ENCODE measurements at regions of chr7 and their contacts with region 1.

Region 1: DNA sequence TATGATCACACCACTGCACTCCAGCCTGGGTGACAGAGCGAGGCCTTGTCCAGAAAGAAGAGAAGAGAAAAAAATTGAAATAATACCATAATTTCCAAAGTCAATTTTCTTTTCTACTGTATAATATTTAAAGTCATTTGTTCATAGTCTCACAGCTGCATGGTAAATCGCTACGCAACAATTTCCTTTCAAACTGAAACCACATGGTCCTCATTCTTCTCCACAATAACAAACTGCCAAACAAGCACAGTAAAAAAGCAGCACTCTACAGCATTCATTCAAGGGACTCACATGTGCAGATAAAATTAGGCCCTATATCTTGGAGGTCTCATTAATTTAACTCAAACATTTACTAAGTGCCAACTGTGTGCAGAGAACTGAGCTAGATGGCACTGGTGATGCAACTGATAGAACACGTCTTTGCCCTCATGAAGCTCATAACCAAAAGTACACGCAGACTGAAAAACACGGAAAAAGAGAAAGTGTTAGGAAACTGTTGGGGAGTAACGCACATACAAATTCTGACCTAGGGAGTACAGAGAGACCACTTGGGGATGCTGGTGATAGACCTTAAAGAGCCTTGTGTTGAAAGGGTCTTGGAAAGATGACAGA is 68.4 kb upstream of the SRRM3 start:
- DNase-seq: no peak
- ATAC-seq: no peak
- H3K4me3 ChIP-seq: no peak overlapping the region
- H3K27ac ChIP-seq: no peak overlapping the region
- H3K4me1 ChIP-seq: peaks cover 42% of the 10 kb centered on the region
- H3K27me3 ChIP-seq: no peaks in the 10 kb centered on the region
- CTCF ChIP-seq: no peak
- EP300 ChIP-seq: no peak
- POLR2A ChIP-seq: no peak
- RAD21 ChIP-seq: no peak

Region 2: DNA sequence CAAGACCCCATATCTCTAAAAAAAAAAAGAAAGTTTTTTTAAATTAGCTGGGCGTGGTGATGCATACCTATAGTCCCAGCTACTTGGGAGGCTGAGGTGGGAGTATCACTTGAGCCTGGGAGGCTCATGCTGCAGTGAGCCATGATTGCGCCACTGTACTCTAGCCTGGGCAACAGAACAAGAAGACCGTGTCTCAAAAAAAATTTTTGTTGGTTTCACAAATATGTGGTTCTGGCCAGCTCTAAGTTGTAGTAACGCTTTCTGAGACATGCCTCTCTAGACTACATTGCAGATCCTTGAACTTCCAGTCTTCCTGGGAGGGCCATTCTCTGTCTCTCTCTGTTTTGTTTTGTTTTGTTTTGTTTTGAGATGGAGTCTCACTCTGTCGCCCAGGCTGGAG is 279.0 kb before region 1 on chr7:
- CTCF ChIA-PET with region 1: no interaction called
- POLR2A ChIA-PET with region 1: no interaction called
- in situ Hi-C with region 1: no loop called
- intact Hi-C with region 1: loop called (anchors 5 kb)
- DNase-seq: no peak
- ATAC-seq: no peak
- H3K4me3 ChIP-seq: no peak overlapping the region
- H3K27ac ChIP-seq: no peak overlapping the region
- H3K4me1 ChIP-seq: peaks cover 22% of the 10 kb centered on the region
- H3K27me3 ChIP-seq: no peaks in the 10 kb centered on the region
- CTCF ChIP-seq: no peak
- EP300 ChIP-seq: no peak
- POLR2A ChIP-seq: no peak
- RAD21 ChIP-seq: no peak

Region 3: DNA sequence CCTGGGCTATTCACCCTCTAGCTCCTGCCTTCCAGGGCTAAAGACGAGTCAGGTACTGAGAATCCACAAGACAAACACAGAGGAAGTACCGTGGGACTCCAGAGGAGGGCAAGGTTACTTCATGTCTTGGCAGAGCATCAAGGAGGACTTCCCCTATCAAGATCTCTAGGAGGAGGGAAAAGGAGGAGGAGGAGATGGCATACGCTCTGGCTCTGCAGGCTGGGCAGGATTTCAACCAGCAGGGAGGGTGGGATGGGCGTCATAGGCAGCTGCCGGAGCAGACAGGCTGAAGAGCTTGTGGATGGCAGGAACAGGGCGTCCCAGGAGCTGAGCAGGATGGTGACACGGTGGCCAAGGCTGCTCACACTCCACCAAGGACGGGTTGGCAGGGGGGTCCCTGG is 64.0 kb before region 1 on chr7:
- CTCF ChIA-PET with region 1: no interaction called
- POLR2A ChIA-PET with region 1: interaction called, 4 read pairs
- in situ Hi-C with region 1: loop called (anchors 5 kb)
- intact Hi-C with region 1: no loop called
- DNase-seq: no peak
- ATAC-seq: no peak
- H3K4me3 ChIP-seq: no peak overlapping the region
- H3K27ac ChIP-seq: no peak overlapping the region
- H3K4me1 ChIP-seq: peaks cover 21% of the 10 kb centered on the region
- H3K27me3 ChIP-seq: no peaks in the 10 kb centered on the region
- CTCF ChIP-seq: no peak
- EP300 ChIP-seq: no peak
- POLR2A ChIP-seq: peak in 1 of 2 experiments; percentile 41; a peak in 1 of 4 replicates
- RAD21 ChIP-seq: no peak

Region 4: GRCh38 chr7:76234931-76235441 is 101.7 kb after region 1 on chr7:
- CTCF ChIA-PET with region 1: no interaction called
- POLR2A ChIA-PET with region 1: no interaction called
- in situ Hi-C with region 1: no loop called
- intact Hi-C with region 1: no loop called
- DNase-seq: peak; percentile 17
- ATAC-seq: peak; percentile 44
- H3K4me3 ChIP-seq: no peak overlapping the region
- H3K27ac ChIP-seq: no peak overlapping the region
- H3K4me1 ChIP-seq: peaks cover 69% of the 10 kb centered on the region
- H3K27me3 ChIP-seq: peaks cover 3 to 6% of the 10 kb centered on the region in 2 experiments; a peak in 3 of 5 replicates
- CTCF ChIP-seq: no peak
- EP300 ChIP-seq: no peak
- POLR2A ChIP-seq: no peak
- RAD21 ChIP-seq: no peak